CD8-positive, alpha-beta memory T cell (primary cell): ENCODE measurements at regions of chr14 and their contacts with region 1.

Region 1: GRCh38 chr14:75063407-75064213 is at the start of gene ACYP1:
- DNase-seq: peak; percentile 83 to 93 (median 87)
- H3K4me3 ChIP-seq: peak within 1 kb of the TSS; percentile 88
- H3K4me3 Mint-ChIP-seq: peak within 1 kb of the TSS; percentile 99 to 100 (median 100)
- H3K27ac ChIP-seq: peak within 1 kb of the TSS; percentile 70
- H3K27ac Mint-ChIP-seq: peak within 1 kb of the TSS; percentile 82 to 98 (median 97)
- H3K4me1 ChIP-seq: peaks cover 8% of the 10 kb centered on the region
- H3K4me1 Mint-ChIP-seq: peaks cover 27 to 46% (median 31%) of the 10 kb centered on the region in 3 donors
- H3K27me3 ChIP-seq: no peaks in the 10 kb centered on the region
- H3K27me3 Mint-ChIP-seq: no peaks in the 10 kb centered on the region
- total RNA-seq, gene ACYP1: 37.4 to 39.2 TPM

Region 2: DNA sequence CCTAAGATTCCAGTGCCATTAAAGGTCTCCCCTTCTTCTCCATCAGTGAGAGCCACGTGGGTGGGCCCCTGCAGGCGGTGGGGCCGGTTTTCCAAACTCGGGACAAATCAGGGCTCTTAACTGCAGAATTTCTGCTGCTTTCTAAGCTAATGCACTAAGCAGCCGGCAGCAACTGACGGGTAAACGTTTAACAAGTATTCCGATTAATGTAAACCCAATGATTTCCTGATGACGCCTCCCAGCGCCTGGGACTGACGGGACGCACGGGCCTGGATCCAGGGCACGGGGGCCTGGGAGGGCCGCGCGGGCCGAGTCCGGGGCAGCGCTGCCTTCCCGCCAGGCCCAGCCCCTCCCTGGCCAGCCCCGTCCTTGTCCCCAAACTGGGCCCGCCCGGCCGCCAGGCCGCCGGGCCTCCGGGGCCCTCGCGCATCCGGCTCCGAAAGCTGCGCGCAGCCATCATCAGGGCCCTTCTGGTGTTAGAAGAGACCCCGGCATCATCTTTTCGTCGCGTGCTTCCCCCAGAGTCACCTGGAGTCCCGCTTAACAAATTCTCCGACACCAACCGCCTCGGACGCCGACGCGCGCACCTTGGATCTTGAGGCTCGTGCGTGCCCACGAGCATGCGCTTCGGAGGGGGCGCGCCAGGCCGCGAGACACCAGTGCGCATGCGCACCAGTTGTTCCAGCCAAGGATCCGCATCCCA is 12.6 kb before region 1 on chr14 and contains the start of gene MLH3:
- CTCF ChIA-PET with region 1: interaction called, 3 read pairs
- POLR2A ChIA-PET with region 1: interaction called, 12 read pairs
- DNase-seq: peak; percentile 75 to 87 (median 77)
- H3K4me3 ChIP-seq: peak within 1 kb of the TSS; percentile 71
- H3K4me3 Mint-ChIP-seq: peak within 1 kb of the TSS; percentile 91 to 95 (median 94)
- H3K27ac ChIP-seq: peak within 1 kb of the TSS; percentile 79
- H3K27ac Mint-ChIP-seq: peak within 1 kb of the TSS; percentile 86 to 96 (median 95)
- H3K4me1 ChIP-seq: peaks cover 16% of the 10 kb centered on the region
- H3K4me1 Mint-ChIP-seq: peaks cover 39 to 56% (median 52%) of the 10 kb centered on the region in 3 donors
- H3K27me3 ChIP-seq: no peaks in the 10 kb centered on the region
- H3K27me3 Mint-ChIP-seq: no peaks in the 10 kb centered on the region
- total RNA-seq, gene MLH3: 16.2 to 16.7 TPM

Region 3: GRCh38 chr14:75120510-75121291 is 57.1 kb after region 1 on chr14:
- CTCF ChIA-PET with region 1: no interaction called
- POLR2A ChIA-PET with region 1: no interaction called
- DNase-seq: no peak
- H3K4me3 ChIP-seq: no peak overlapping the region
- H3K4me3 Mint-ChIP-seq: no peak overlapping the region
- H3K27ac ChIP-seq: no peak overlapping the region
- H3K27ac Mint-ChIP-seq: peak overlapping the region in 2 of 8 donors; percentile 20 to 30
- H3K4me1 ChIP-seq: peaks cover 18% of the 10 kb centered on the region
- H3K4me1 Mint-ChIP-seq: peaks cover 16 to 32% (median 29%) of the 10 kb centered on the region in 3 donors
- H3K27me3 ChIP-seq: no peaks in the 10 kb centered on the region
- H3K27me3 Mint-ChIP-seq: no peaks in the 10 kb centered on the region

Region 4: GRCh38 chr14:75757644-75758402 is 694.2 kb after region 1 on chr14:
- CTCF ChIA-PET with region 1: no interaction called
- POLR2A ChIA-PET with region 1: no interaction called
- DNase-seq: no peak
- H3K4me3 ChIP-seq: no peak overlapping the region
- H3K4me3 Mint-ChIP-seq: no peak overlapping the region
- H3K27ac ChIP-seq: no peak overlapping the region
- H3K27ac Mint-ChIP-seq: no peak overlapping the region
- H3K4me1 ChIP-seq: no peaks in the 10 kb centered on the region
- H3K4me1 Mint-ChIP-seq: no peaks in the 10 kb centered on the region
- H3K27me3 ChIP-seq: no peaks in the 10 kb centered on the region
- H3K27me3 Mint-ChIP-seq: no peaks in the 10 kb centered on the region